ENCODE measurements at regions of chrX and their contacts with region 1.

Region 1: DNA sequence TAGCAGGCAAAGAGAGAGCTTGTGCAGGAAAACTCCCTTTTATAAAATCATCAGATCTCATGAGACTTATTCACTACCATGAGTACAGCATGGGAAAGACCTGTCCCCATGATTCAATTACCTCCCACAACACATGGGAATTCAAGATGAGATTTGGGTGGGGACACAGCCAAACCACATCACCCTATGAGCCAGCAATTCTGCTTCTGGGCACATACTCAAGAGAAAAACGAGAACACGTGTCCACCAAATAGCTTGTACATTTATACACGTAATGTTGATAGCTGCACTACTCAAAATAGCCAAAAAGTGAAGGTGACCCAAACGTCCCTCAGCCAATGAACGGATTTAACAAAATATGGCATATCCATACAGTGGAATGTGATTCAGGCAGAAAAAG is 94.5 kb upstream of the DHRSX start:
- DNase-seq: no peak
- ATAC-seq: no peak
- H3K4me3 Mint-ChIP-seq: no peak overlapping the region
- H3K27ac Mint-ChIP-seq: no peak overlapping the region
- H3K4me1 Mint-ChIP-seq: peaks cover 6% of the 10 kb centered on the region
- H3K27me3 Mint-ChIP-seq: no peaks in the 10 kb centered on the region
- CTCF ChIP-seq: no peak

Region 2: DNA sequence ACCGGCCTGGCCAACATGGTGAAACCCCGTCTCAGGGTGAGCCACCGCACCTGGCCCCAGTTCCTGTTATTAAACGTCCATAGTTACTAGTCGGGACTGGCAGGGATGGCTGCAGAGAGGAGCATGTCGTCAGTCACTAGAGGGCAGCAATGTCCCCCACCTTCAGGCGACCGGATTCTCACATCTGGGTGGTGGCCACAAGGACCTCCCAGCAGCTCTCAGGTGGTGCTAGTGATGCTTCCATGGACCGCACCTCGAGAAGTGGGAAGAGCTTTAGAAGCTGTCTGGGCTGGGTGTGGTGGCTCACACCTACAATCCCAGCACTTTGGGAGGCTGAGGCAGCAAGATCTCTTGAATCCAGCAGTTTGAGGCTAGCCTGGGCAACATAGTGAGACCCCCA is 1271.9 kb before region 1 on chrX:
- CTCF ChIA-PET with region 1: no interaction called
- POLR2A ChIA-PET with region 1: no interaction called
- intact Hi-C with region 1: loop called (anchors 1 kb)
- DNase-seq: peak; percentile 28
- ATAC-seq: peak; percentile 87
- H3K4me3 Mint-ChIP-seq: peak overlapping the region; percentile 3
- H3K27ac Mint-ChIP-seq: peak overlapping the region; percentile 21
- H3K4me1 Mint-ChIP-seq: peaks cover 13% of the 10 kb centered on the region
- H3K27me3 Mint-ChIP-seq: peaks cover 9% of the 10 kb centered on the region
- CTCF ChIP-seq: no peak

Region 3: GRCh38 chrX:1649621-1650020 is 945.6 kb before region 1 on chrX:
- CTCF ChIA-PET with region 1: no interaction called
- POLR2A ChIA-PET with region 1: no interaction called
- intact Hi-C with region 1: loop called (anchors 1 kb)
- DNase-seq: no peak
- ATAC-seq: no peak
- H3K4me3 Mint-ChIP-seq: no peak overlapping the region
- H3K27ac Mint-ChIP-seq: no peak overlapping the region
- H3K4me1 Mint-ChIP-seq: peaks cover 8% of the 10 kb centered on the region
- H3K27me3 Mint-ChIP-seq: peaks cover 9% of the 10 kb centered on the region
- CTCF ChIP-seq: no peak

Region 4: GRCh38 chrX:1657367-1658070 is 937.7 kb before region 1 on chrX:
- CTCF ChIA-PET with region 1: no interaction called
- POLR2A ChIA-PET with region 1: no interaction called
- intact Hi-C with region 1: loop called (anchors 1 kb)
- DNase-seq: peak; percentile 18
- ATAC-seq: no peak
- H3K4me3 Mint-ChIP-seq: peak overlapping the region; percentile 80
- H3K27ac Mint-ChIP-seq: peak overlapping the region; percentile 81
- H3K4me1 Mint-ChIP-seq: peaks cover 27% of the 10 kb centered on the region
- H3K27me3 Mint-ChIP-seq: no peaks in the 10 kb centered on the region
- CTCF ChIP-seq: no peak

Region 5: GRCh38 chrX:1673337-1673736 is 921.9 kb before region 1 on chrX:
- CTCF ChIA-PET with region 1: no interaction called
- POLR2A ChIA-PET with region 1: no interaction called
- intact Hi-C with region 1: loop called (anchors 1 kb)
- DNase-seq: no peak
- ATAC-seq: peak; percentile 60
- H3K4me3 Mint-ChIP-seq: no peak overlapping the region
- H3K27ac Mint-ChIP-seq: no peak overlapping the region
- H3K4me1 Mint-ChIP-seq: no peaks in the 10 kb centered on the region
- H3K27me3 Mint-ChIP-seq: no peaks in the 10 kb centered on the region
- CTCF ChIP-seq: no peak

Region 6: GRCh38 chrX:2500267-2501075 is 94.8 kb before region 1 on chrX and contains the starts of genes DHRSX and ZBED1:
- CTCF ChIA-PET with region 1: no interaction called
- POLR2A ChIA-PET with region 1: no interaction called
- intact Hi-C with region 1: loop called (anchors 1 kb)
- DNase-seq: peak; percentile 63
- ATAC-seq: peak; percentile 77
- H3K4me3 Mint-ChIP-seq: peak within 1 kb of the TSS; percentile 82
- H3K27ac Mint-ChIP-seq: peak within 1 kb of the TSS; percentile 74
- H3K4me1 Mint-ChIP-seq: peaks cover 33% of the 10 kb centered on the region
- H3K27me3 Mint-ChIP-seq: no peaks in the 10 kb centered on the region
- CTCF ChIP-seq: no peak
- total RNA-seq, gene DHRSX: 23.2 and 28.3 TPM in 2 replicates
- total RNA-seq, gene ZBED1: 49.5 and 50.1 TPM in 2 replicates